Psoas muscle (tissue), 8 donors: ENCODE measurements at regions of chr11 and their contacts with region 1.

Region 1: GRCh38 chr11:10716127-10716526 is 22.6 kb upstream of the IRAG1 start:
- DNase-seq: no peak
- ATAC-seq: no peak
- H3K4me3 ChIP-seq: no peak overlapping the region
- H3K27ac ChIP-seq: no peak overlapping the region
- H3K4me1 ChIP-seq: no peaks in the 10 kb centered on the region
- H3K27me3 ChIP-seq: no peaks in the 10 kb centered on the region
- CTCF ChIP-seq: no peak

Region 2: GRCh38 chr11:10641177-10641911 is 74.8 kb before region 1 on chr11:
- intact Hi-C with region 1: loop called in 1 of 2 experiments (anchors 5 kb)
- DNase-seq: no peak
- ATAC-seq: no peak
- H3K4me3 ChIP-seq: no peak overlapping the region
- H3K27ac ChIP-seq: no peak overlapping the region
- H3K4me1 ChIP-seq: no peaks in the 10 kb centered on the region
- H3K27me3 ChIP-seq: no peaks in the 10 kb centered on the region
- CTCF ChIP-seq: no peak